ENCODE measurements at regions of chr3 and their contacts with region 1.

Region 1: GRCh38 chr3:149120051-149120972 is 9.1 kb upstream of the HPS3 start:
- DNase-seq: peak; percentile 42

Region 2: DNA sequence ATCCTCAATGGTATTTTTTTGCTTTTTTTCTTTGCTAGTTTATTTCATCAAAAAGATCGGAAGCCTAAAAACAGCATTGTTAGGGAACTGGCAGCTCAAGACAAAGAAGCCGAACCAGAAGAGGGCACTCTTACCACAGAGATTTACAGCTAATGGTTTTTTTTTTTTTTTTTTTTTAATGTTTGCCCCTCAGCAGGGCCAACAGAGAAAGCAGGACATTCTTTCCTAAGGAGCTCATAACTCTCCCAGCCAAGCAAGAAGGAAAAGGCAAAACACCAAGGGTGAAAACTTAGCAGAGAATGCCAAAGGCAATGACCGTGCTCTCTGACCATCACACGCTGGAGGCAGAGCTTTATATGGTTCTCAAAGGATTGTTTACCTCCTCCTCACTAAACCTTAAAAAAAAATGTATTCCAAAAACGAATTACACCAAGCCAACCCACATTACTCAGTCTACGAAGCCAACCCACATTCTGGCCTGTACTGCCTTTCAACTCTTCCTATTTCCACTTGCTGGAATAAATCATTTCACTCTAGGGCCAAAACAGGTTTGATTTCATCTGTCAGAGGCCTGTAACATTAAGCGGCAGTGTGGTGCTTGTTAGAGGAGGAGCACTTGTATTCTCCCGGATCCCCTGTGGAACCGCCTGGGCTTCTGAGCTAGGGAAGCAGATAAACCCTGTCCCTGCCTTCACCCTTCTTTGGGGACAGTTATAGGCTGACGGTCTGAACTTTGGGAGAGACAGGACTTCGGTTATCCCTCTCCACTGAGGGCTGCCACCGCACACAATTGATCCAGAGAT is 164.6 kb before region 1 on chr3:
- CTCF ChIA-PET with region 1: interaction called, 11 read pairs
- POLR2A ChIA-PET with region 1: no interaction called
- DNase-seq: peak; percentile 62

Region 3: DNA sequence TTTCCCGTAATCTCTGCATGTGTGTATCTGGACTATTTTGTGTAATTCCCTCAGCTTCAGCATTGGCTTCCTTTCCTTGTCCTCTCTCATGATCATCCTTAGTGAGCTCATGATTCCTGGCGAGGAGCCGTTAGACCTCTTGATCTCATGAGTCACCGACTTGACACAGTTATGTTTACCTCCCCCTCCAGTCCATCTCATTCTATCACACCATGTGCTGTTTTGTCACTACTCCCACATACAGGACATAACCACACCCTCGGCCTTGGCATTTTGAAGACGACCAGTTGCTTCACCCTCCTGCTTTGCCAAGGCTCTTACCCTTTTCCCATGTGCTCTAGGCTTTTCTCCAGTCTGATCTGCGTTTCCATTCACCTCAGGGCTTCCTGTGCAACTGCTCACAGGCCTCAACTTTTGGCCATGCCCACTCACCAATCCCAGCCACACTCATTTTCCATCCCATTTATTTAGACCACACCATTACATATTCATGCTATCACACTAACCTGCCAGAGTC is 59.8 kb after region 1 on chr3:
- CTCF ChIA-PET with region 1: no interaction called
- POLR2A ChIA-PET with region 1: no interaction called
- DNase-seq: peak; percentile 8

Region 4: GRCh38 chr3:149274220-149274619 is 153.9 kb after region 1 on chr3:
- CTCF ChIA-PET with region 1: interaction called, 10 read pairs
- POLR2A ChIA-PET with region 1: no interaction called
- DNase-seq: no peak